CD4-positive, alpha-beta T cell (primary cell): ENCODE measurements at regions of chr2 and their contacts with region 1.

Region 1: DNA sequence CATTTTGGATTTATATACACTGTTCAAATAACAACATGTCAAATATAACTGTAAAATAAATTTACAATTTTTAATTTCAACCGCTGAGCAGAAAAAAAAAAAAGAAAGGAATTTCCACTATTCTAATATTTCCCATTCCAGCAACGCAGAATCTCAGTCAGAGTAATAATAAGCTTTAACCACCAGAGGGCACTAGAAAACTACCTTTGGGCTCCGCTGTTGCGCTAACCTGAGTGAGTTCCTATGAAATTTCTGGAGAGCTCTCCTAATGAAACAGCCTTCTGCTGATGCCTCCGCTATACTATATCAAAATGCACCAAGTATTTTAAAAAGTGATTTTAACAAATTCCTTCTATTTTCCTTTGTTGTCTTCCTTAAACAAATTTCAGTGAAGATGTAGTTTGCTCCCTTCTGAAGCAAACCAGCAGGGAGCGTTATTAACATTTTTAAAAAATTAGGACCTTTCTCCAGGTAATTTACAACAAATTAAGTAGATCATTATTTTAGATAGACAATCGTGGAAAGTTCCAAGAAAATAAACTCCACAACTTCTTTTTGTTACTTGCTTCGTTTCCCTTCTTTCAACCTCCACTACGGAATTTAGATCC is 23.0 kb downstream of the ERMN start:
- DNase-seq: peak in 9 of 14 experiments; percentile 5 to 74 (median 24)
- ATAC-seq: peak; percentile 83
- H3K4me3 ChIP-seq: no peak overlapping the region
- H3K4me3 Mint-ChIP-seq: no peak overlapping the region
- H3K27ac ChIP-seq: no peak overlapping the region
- H3K27ac Mint-ChIP-seq: no peak overlapping the region
- H3K4me1 ChIP-seq: no peaks in the 10 kb centered on the region
- H3K4me1 Mint-ChIP-seq: peaks cover 28% of the 10 kb centered on the region
- H3K27me3 ChIP-seq: no peaks in the 10 kb centered on the region
- H3K27me3 Mint-ChIP-seq: peaks cover 8% of the 10 kb centered on the region
- CTCF ChIP-seq: peak; percentile 98

Region 2: GRCh38 chr2:156982615-156983014 is 320.0 kb before region 1 on chr2:
- CTCF ChIA-PET with region 1: no interaction called
- POLR2A ChIA-PET with region 1: no interaction called
- intact Hi-C with region 1: no loop called
- DNase-seq: no peak
- ATAC-seq: no peak
- H3K4me3 ChIP-seq: no peak overlapping the region
- H3K4me3 Mint-ChIP-seq: no peak overlapping the region
- H3K27ac ChIP-seq: no peak overlapping the region
- H3K27ac Mint-ChIP-seq: no peak overlapping the region
- H3K4me1 ChIP-seq: no peaks in the 10 kb centered on the region
- H3K4me1 Mint-ChIP-seq: no peaks in the 10 kb centered on the region
- H3K27me3 ChIP-seq: no peaks in the 10 kb centered on the region
- H3K27me3 Mint-ChIP-seq: no peaks in the 10 kb centered on the region
- CTCF ChIP-seq: no peak

Region 3: GRCh38 chr2:157336137-157337010 is 33.8 kb after region 1 on chr2:
- CTCF ChIA-PET with region 1: interaction called, 12 read pairs
- POLR2A ChIA-PET with region 1: no interaction called
- intact Hi-C with region 1: no loop called
- DNase-seq: peak in 10 of 14 experiments; percentile 12 to 76 (median 28)
- ATAC-seq: no peak
- H3K4me3 ChIP-seq: peak overlapping the region; percentile 6
- H3K4me3 Mint-ChIP-seq: peak overlapping the region; percentile 79
- H3K27ac ChIP-seq: no peak overlapping the region
- H3K27ac Mint-ChIP-seq: peak overlapping the region; percentile 83
- H3K4me1 ChIP-seq: peaks cover 30% of the 10 kb centered on the region
- H3K4me1 Mint-ChIP-seq: peaks cover 88% of the 10 kb centered on the region
- H3K27me3 ChIP-seq: no peaks in the 10 kb centered on the region
- H3K27me3 Mint-ChIP-seq: no peaks in the 10 kb centered on the region
- CTCF ChIP-seq: peak; percentile 82

Region 4: DNA sequence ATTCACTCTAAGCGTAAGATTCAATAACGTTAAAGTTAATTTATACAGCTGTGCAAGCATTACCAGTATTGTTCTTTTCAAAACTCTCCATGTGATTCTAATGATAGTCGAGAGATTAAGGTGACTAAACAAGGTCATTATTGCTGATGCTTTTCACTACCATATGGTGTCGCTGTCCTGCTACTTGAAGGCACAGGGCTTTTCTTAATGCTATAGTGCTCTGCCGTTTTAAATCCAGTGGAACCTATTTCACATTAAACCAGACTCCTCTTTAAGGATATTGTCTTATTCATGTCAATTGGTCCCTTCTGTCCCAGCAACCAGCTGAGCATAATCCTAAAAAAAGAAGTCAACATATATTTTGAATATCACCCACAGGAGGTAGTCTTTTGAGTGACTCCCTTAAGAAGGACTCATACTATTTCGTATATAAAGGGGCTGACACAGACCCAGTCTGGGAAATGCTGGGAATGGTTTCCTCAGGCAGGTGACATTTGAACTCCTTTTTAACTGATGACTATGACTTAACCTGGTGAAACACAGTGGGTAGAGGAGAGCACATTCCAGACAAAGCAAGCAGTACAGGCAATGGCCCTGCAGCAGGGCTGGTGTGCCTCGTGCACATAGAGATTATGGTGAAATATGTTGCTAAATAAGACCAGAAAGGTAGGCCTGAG is 195.2 kb after region 1 on chr2:
- CTCF ChIA-PET with region 1: interaction called, 11 read pairs
- POLR2A ChIA-PET with region 1: interaction called, 5 read pairs
- intact Hi-C with region 1: no loop called
- DNase-seq: peak in 4 of 14 experiments; percentile 8 to 66 (median 60)
- ATAC-seq: peak; percentile 96
- H3K4me3 ChIP-seq: no peak overlapping the region
- H3K4me3 Mint-ChIP-seq: no peak overlapping the region
- H3K27ac ChIP-seq: no peak overlapping the region
- H3K27ac Mint-ChIP-seq: no peak overlapping the region
- H3K4me1 ChIP-seq: peaks cover under 1% of the 10 kb centered on the region
- H3K4me1 Mint-ChIP-seq: peaks cover 28% of the 10 kb centered on the region
- H3K27me3 ChIP-seq: no peaks in the 10 kb centered on the region
- H3K27me3 Mint-ChIP-seq: no peaks in the 10 kb centered on the region
- CTCF ChIP-seq: peak; percentile 77

Region 5: GRCh38 chr2:157751462-157752058 is 449.0 kb after region 1 on chr2:
- CTCF ChIA-PET with region 1: interaction called, 4 read pairs
- POLR2A ChIA-PET with region 1: no interaction called
- intact Hi-C with region 1: loop called (anchors 2 kb)
- DNase-seq: peak in 8 of 14 experiments; percentile 6 to 46 (median 14)
- ATAC-seq: no peak
- H3K4me3 ChIP-seq: no peak overlapping the region
- H3K4me3 Mint-ChIP-seq: no peak overlapping the region
- H3K27ac ChIP-seq: no peak overlapping the region
- H3K27ac Mint-ChIP-seq: no peak overlapping the region
- H3K4me1 ChIP-seq: no peaks in the 10 kb centered on the region
- H3K4me1 Mint-ChIP-seq: peaks cover 5% of the 10 kb centered on the region
- H3K27me3 ChIP-seq: no peaks in the 10 kb centered on the region
- H3K27me3 Mint-ChIP-seq: no peaks in the 10 kb centered on the region
- CTCF ChIP-seq: no peak

Region 6: GRCh38 chr2:158006961-158007719 is 704.5 kb after region 1 on chr2:
- CTCF ChIA-PET with region 1: interaction called, 6 read pairs
- POLR2A ChIA-PET with region 1: no interaction called
- intact Hi-C with region 1: loop called (anchors 1 kb)
- DNase-seq: peak in 2 of 14 experiments; percentile 16 to 20
- ATAC-seq: no peak
- H3K4me3 ChIP-seq: no peak overlapping the region
- H3K4me3 Mint-ChIP-seq: no peak overlapping the region
- H3K27ac ChIP-seq: no peak overlapping the region
- H3K27ac Mint-ChIP-seq: no peak overlapping the region
- H3K4me1 ChIP-seq: no peaks in the 10 kb centered on the region
- H3K4me1 Mint-ChIP-seq: peaks cover 9% of the 10 kb centered on the region
- H3K27me3 ChIP-seq: no peaks in the 10 kb centered on the region
- H3K27me3 Mint-ChIP-seq: no peaks in the 10 kb centered on the region
- CTCF ChIP-seq: no peak

Region 7: GRCh38 chr2:158745044-158745865 is 1442.7 kb after region 1 on chr2:
- CTCF ChIA-PET with region 1: no interaction called
- POLR2A ChIA-PET with region 1: interaction called, 3 read pairs
- intact Hi-C with region 1: loop called (anchors 5 kb)
- DNase-seq: peak in 12 of 14 experiments; percentile 3 to 56 (median 17)
- ATAC-seq: peak; percentile 43
- H3K4me3 ChIP-seq: no peak overlapping the region
- H3K4me3 Mint-ChIP-seq: no peak overlapping the region
- H3K27ac ChIP-seq: no peak overlapping the region
- H3K27ac Mint-ChIP-seq: no peak overlapping the region
- H3K4me1 ChIP-seq: no peaks in the 10 kb centered on the region
- H3K4me1 Mint-ChIP-seq: no peaks in the 10 kb centered on the region
- H3K27me3 ChIP-seq: peaks cover 14 to 20% of the 10 kb centered on the region in 2 experiments
- H3K27me3 Mint-ChIP-seq: peaks cover 46% of the 10 kb centered on the region
- CTCF ChIP-seq: no peak